HEK293 (cell line): ENCODE measurements at regions of chr6 and their contacts with region 1.

Region 1: GRCh38 chr6:44151348-44152108 is 7.1 kb upstream of the CAPN11 start:
- H3K4me3 ChIP-seq: no peak overlapping the region
- H3K27ac ChIP-seq: no peak overlapping the region
- H3K4me1 ChIP-seq: no peaks in the 10 kb centered on the region
- CTCF ChIP-seq: peak; percentile 99

Region 2: DNA sequence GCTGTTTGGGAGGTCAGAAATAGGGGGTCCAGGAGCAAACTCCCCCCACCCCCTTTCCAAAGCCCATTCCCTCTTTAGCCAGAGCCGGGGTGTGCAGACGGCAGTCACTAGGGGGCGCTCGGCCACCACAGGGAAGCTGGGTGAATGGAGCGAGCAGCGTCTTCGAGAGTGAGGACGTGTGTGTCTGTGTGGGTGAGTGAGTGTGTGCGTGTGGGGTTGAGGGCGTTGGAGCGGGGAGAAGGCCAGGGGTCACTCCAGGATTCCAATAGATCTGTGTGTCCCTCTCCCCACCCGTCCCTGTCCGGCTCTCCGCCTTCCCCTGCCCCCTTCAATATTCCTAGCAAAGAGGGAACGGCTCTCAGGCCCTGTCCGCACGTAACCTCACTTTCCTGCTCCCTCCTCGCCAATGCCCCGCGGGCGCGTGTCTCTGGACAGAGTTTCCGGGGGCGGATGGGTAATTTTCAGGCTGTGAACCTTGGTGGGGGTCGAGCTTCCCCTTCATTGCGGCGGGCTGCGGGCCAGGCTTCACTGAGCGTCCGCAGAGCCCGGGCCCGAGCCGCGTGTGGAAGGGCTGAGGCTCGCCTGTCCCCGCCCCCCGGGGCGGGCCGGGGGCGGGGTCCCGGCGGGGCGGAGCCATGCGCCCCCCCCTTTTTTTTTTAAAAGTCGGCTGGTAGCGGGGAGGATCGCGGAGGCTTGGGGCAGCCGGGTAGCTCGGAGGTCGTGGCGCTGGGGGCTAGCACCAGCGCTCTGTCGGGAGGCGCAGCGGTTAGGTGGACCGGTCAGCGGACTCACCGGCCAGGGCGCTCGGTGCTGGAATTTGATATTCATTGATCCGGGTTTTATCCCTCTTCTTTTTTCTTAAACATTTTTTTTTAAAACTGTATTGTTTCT is 381.8 kb before region 1 on chr6 and contains the start of gene VEGFA:
- CTCF ChIA-PET with region 1: no interaction called
- POLR2A ChIA-PET with region 1: no interaction called
- H3K4me3 ChIP-seq: peak within 1 kb of the TSS; percentile 84
- H3K27ac ChIP-seq: peak within 1 kb of the TSS; percentile 82
- H3K4me1 ChIP-seq: no peaks in the 10 kb centered on the region; the same call in 1 of the 2 replicates
- CTCF ChIP-seq: peak; percentile 98

Region 3: GRCh38 chr6:43977404-43978111 is 174.0 kb before region 1 on chr6:
- CTCF ChIA-PET with region 1: no interaction called
- POLR2A ChIA-PET with region 1: no interaction called
- H3K4me3 ChIP-seq: no peak overlapping the region
- H3K27ac ChIP-seq: no peak overlapping the region
- H3K4me1 ChIP-seq: no peaks in the 10 kb centered on the region
- CTCF ChIP-seq: no peak

Region 4: GRCh38 chr6:44133003-44133931 is 18.3 kb before region 1 on chr6:
- CTCF ChIA-PET with region 1: interaction called, 29 read pairs
- POLR2A ChIA-PET with region 1: interaction called, 5 read pairs
- H3K4me3 ChIP-seq: no peak overlapping the region
- H3K27ac ChIP-seq: no peak overlapping the region
- H3K4me1 ChIP-seq: peaks cover 7% of the 10 kb centered on the region
- CTCF ChIP-seq: peak; percentile 48; the same call in 1 of the 2 replicates

Region 5: DNA sequence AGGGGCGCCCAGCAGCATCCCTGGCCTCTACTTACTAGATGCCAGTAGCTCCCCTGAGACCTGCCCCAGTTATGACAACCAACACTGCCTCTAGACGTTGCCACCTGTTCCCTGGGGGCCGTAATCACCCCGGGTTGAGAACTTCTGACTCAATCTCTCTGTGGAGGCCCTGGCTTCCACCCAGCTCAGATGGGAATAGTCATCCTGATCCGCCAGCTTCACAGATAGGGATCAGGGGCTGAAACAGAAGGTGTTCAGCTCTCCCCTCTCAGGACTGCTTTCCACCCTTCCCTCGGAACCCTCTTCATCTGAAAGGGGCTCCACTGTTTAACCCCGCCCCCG is 10.4 kb after region 1 on chr6:
- CTCF ChIA-PET with region 1: interaction called, 27 read pairs
- POLR2A ChIA-PET with region 1: no interaction called
- H3K4me3 ChIP-seq: no peak overlapping the region
- H3K27ac ChIP-seq: no peak overlapping the region
- H3K4me1 ChIP-seq: peaks cover 5% of the 10 kb centered on the region; the same call in 1 of the 2 replicates
- CTCF ChIP-seq: no peak

Region 6: GRCh38 chr6:44285552-44286284 is 134.2 kb after region 1 on chr6:
- CTCF ChIA-PET with region 1: no interaction called
- POLR2A ChIA-PET with region 1: no interaction called
- H3K4me3 ChIP-seq: no peak overlapping the region
- H3K27ac ChIP-seq: no peak overlapping the region
- H3K4me1 ChIP-seq: no peaks in the 10 kb centered on the region
- CTCF ChIP-seq: no peak